ENCODE measurements at regions of chr10 and their contacts with region 1.

Region 1: GRCh38 chr10:71597821-71598498 is 121.6 kb downstream of the C10orf105 start:
- DNase-seq: no peak
- H3K4me3 ChIP-seq: no peak overlapping the region
- CTCF ChIP-seq: no peak

Region 2: DNA sequence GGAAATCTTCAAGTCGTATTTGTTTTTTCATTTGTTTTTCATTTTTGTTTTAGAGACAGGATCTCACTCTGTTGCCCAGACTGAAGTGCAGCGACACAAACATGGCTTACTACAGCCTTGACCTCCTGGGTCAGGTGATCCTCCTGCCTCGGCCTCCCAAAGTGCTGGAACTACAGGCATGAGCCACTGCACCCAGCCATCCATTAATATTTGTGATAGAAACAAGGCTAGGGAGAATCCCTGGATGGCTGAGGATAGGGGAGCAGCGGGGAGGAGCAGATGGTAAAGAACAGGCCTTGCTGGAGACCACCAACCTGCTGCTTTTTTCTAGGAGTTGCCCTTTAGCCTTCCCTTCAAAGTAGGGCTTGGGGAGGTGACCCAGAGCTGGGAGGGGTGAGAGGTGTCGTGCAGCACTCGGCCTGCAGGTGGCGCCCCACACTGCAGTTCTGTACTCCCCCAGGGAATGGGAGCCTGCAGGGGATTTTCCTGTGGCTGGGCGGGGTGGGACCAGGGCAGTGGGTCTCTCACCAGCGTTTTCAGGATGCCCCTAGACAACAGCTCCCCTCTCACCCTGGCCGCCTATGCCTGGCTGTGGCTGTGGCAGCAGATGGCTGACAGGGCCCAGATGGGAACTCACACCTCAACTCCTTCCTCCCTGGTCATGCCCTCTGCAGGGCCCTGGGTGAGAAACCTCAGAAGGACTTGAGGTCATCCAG is 213.8 kb before region 1 on chr10:
- in situ Hi-C with region 1: loop called (anchors 25 kb)
- DNase-seq: no peak
- H3K4me3 ChIP-seq: no peak overlapping the region
- CTCF ChIP-seq: peak; percentile 90

Region 3: GRCh38 chr10:71462062-71462935 is 135.7 kb before region 1 on chr10:
- in situ Hi-C with region 1: no loop called
- DNase-seq: no peak
- H3K4me3 ChIP-seq: no peak overlapping the region
- CTCF ChIP-seq: no peak